ENCODE measurements at regions of chr1 and their contacts with region 1.

Region 1: GRCh38 chr1:214123061-214123784 is 135.4 kb downstream of the PROX1 start:
- DNase-seq: no peak

Region 2: DNA sequence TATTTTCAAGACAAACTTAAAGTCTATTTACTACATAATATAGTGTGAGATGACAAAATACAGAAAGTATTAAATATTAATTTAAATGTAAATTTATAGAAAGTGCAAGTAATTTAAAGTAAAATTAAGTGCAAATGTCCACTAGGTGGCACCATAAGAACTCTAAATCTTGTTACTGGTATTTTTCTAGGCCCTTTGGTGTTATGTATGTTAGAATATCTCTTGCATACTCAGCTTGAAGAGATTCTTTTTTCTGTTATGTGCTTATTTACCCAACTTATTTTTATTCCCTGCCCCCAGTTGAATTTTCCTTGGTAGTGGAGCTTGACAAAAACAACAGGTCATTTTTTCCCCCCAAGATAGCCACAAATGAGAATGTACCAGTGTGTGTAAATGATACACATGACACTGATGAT is 1000.7 kb before region 1 on chr1:
- intact Hi-C with region 1: loop called (anchors 10 kb)
- DNase-seq: no peak

Region 3: DNA sequence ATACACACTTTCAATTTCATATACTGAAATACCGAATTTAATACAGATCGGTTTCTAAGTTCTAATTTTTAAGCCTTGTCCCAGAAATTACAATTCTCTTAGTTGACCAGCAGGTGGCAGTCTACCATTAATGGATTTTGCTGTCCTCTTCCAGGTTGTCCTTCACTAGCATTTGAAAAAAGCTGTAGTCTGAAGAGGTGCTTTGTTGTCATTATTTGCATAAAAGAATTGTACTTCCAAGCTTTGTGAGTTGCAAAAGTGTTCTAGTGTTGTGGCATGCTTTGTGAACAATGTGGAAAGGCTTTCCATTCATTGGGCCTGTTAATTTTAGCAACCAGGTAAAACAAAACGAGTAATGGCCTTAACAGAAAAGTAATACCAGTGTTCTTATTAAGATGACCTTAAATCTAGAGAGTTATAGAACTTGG is 878.5 kb before region 1 on chr1:
- intact Hi-C with region 1: loop called (anchors 5 kb)
- DNase-seq: no peak

Region 4: GRCh38 chr1:213564215-213564659 is 559.0 kb before region 1 on chr1:
- intact Hi-C with region 1: loop called (anchors 2 kb)
- DNase-seq: no peak

Region 5: DNA sequence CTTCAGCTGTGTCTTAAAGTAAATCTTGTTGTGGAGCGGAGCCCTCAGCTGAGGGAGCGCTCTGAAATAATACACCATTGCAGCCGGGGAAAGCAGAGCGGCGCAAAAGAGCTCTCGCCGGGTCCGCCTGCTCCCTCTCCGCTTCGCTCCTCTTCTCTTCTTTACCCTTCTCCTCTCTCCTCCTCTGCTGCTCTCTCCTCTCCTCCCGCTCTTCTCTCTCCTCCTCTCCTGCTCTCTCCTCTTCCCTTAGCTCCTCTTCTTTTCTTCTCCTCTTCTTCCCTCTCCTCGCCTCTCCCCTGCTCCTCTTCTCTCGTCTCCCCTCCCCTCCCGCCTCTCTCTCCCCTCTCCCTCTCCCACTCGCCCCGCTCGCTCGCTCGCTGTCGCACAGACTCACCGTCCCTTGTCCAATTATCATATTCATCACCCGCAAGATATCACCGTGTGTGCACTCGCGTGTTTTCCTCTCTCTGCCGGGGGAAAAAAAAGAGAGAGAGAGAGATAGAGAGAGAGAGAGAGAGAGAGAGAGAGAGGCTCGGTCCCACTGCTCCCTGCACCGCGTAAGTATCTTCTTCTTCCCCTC is 135.2 kb before region 1 on chr1 and contains the start of gene PROX1:
- intact Hi-C with region 1: loop called (anchors 2 kb)
- DNase-seq: no peak
- total RNA-seq, gene PROX1: 110 TPM